Esophagus muscularis mucosa (tissue), 4 donors: ENCODE measurements at regions of chr1 and their contacts with region 1.

Region 1: GRCh38 chr1:74733604-74734484 is 892 bp downstream of the TYW3 start:
- DNase-seq: no peak
- H3K4me3 ChIP-seq: peak overlapping the region; percentile 76 to 93 (median 80)
- H3K27ac ChIP-seq: peak overlapping the region; percentile 84 to 91 (median 87)
- H3K4me1 ChIP-seq: peaks cover 41 to 56% (median 47%) of the 10 kb centered on the region in 4 donors
- H3K27me3 ChIP-seq: no peaks in the 10 kb centered on the region
- CTCF ChIP-seq: peak; percentile 67 to 72 (median 69)
- EP300 ChIP-seq: no peak
- POLR2A ChIP-seq: no peak

Region 2: DNA sequence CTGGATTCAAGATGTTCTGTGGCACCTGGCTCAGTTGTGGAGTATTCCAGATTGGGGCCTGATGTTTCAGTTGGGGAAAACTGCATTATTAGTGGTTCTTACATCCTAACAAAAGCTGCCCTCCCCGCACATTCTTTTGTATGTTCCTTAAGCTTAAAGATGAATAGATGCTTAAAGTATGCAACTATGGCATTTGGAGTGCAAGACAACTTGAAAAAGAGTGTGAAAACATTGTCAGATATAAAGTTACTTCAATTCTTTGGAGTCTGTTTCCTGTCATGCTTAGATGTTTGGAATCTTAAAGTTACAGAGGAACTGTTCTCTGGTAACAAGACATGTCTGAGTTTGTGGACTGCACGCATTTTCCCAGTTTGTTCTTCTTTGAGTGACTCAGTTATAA is 528.6 kb before region 1 on chr1:
- intact Hi-C with region 1: loop called (anchors 10 kb)
- DNase-seq: no peak
- H3K4me3 ChIP-seq: no peak overlapping the region
- H3K27ac ChIP-seq: no peak overlapping the region
- H3K4me1 ChIP-seq: no peaks in the 10 kb centered on the region
- H3K27me3 ChIP-seq: no peaks in the 10 kb centered on the region
- CTCF ChIP-seq: no peak
- EP300 ChIP-seq: no peak
- POLR2A ChIP-seq: no peak

Region 3: DNA sequence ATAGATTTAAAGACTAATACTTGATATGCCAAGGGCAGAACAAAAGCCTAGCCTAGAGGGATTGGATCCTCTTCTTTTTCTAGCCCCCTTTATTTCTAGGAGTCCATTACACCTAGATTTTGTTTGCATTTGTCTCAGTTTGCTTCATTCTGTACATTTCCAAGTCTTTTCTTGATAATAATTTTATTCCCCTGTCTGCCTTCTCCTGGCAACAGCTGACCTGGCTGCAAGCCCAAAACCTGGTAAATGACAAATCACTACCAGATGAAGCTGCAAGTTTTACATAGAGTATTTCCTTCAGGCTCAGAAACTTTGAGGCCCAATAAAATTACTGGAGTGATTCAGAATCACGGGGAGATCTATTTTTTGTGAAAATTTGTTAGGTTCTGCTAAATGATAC is 363.8 kb after region 1 on chr1:
- intact Hi-C with region 1: no loop called
- DNase-seq: no peak
- H3K4me3 ChIP-seq: no peak overlapping the region
- H3K27ac ChIP-seq: no peak overlapping the region
- H3K4me1 ChIP-seq: peaks cover 0 to 6% (median 2%) of the 10 kb centered on the region in 4 donors
- H3K27me3 ChIP-seq: no peaks in the 10 kb centered on the region
- CTCF ChIP-seq: no peak
- EP300 ChIP-seq: no peak
- POLR2A ChIP-seq: no peak